ENCODE measurements at regions of chr1 and their contacts with region 1.

Region 1: GRCh38 chr1:1122078-1122811 is 6.4 kb upstream of the C1orf159 start:
- DNase-seq: peak; percentile 69 to 82 (median 82)
- ATAC-seq: peak; percentile 95
- H3K4me3 ChIP-seq: no peak overlapping the region
- H3K27ac ChIP-seq: no peak overlapping the region
- H3K4me1 ChIP-seq: peaks cover 0 to 53% of the 10 kb centered on the region in 2 experiments; a peak in 3 of 5 replicates
- H3K27me3 ChIP-seq: peaks cover 24 to 70% of the 10 kb centered on the region in 2 experiments; a peak in 4 of 5 replicates
- CTCF ChIP-seq: peak; percentile 85 to 95 (median 92)
- EP300 ChIP-seq: no peak
- POLR2A ChIP-seq: no peak
- RAD21 ChIP-seq: peak; percentile 97 to 99

Region 2: GRCh38 chr1:1206376-1207260 is 84.4 kb after region 1 on chr1 and contains the start of gene TNFRSF18:
- CTCF ChIA-PET with region 1: interaction called, 3 read pairs
- POLR2A ChIA-PET with region 1: no interaction called
- in situ Hi-C with region 1: no loop called
- intact Hi-C with region 1: loop called (anchors 5 kb)
- DNase-seq: no peak
- ATAC-seq: no peak
- H3K4me3 ChIP-seq: no peak within 1 kb of the TSS
- H3K27ac ChIP-seq: no peak within 1 kb of the TSS
- H3K4me1 ChIP-seq: peaks cover 13 to 91% of the 10 kb centered on the region in 2 experiments; a peak in 4 of 5 replicates
- H3K27me3 ChIP-seq: no peaks in the 10 kb centered on the region
- CTCF ChIP-seq: peak in 2 of 3 experiments; percentile 8 to 37; a peak in 1 of 6 replicates
- EP300 ChIP-seq: no peak
- POLR2A ChIP-seq: no peak
- RAD21 ChIP-seq: no peak
- polyA plus RNA-seq, gene TNFRSF18: not detected

Region 3: GRCh38 chr1:1231400-1232223 is 109.4 kb after region 1 on chr1 and contains the start of gene SDF4:
- CTCF ChIA-PET with region 1: no interaction called
- POLR2A ChIA-PET with region 1: interaction called, 5 read pairs
- in situ Hi-C with region 1: no loop called
- intact Hi-C with region 1: loop called (anchors 5 kb)
- DNase-seq: peak; percentile 99 to 100 (median 100)
- ATAC-seq: peak; percentile 99
- H3K4me3 ChIP-seq: peak within 1 kb of the TSS; percentile 79
- H3K27ac ChIP-seq: peak within 1 kb of the TSS; percentile 96
- H3K4me1 ChIP-seq: peaks cover 6 to 83% of the 10 kb centered on the region in 2 experiments; a peak in 4 of 5 replicates
- H3K27me3 ChIP-seq: no peaks in the 10 kb centered on the region
- CTCF ChIP-seq: no peak
- EP300 ChIP-seq: no peak
- POLR2A ChIP-seq: peak; percentile 91
- RAD21 ChIP-seq: no peak
- polyA plus RNA-seq, gene SDF4: 0.35 to 4.9 TPM

Region 4: GRCh38 chr1:1250786-1251284 is 128.6 kb after region 1 on chr1:
- CTCF ChIA-PET with region 1: interaction called, 12 read pairs
- POLR2A ChIA-PET with region 1: no interaction called
- in situ Hi-C with region 1: no loop called
- intact Hi-C with region 1: loop called (anchors 5 kb)
- DNase-seq: no peak
- ATAC-seq: peak; percentile 20
- H3K4me3 ChIP-seq: no peak overlapping the region
- H3K27ac ChIP-seq: no peak overlapping the region
- H3K4me1 ChIP-seq: peaks cover 0 to 51% of the 10 kb centered on the region in 2 experiments; a peak in 3 of 5 replicates
- H3K27me3 ChIP-seq: no peaks in the 10 kb centered on the region
- CTCF ChIP-seq: no peak
- EP300 ChIP-seq: no peak
- POLR2A ChIP-seq: no peak
- RAD21 ChIP-seq: no peak

Region 5: DNA sequence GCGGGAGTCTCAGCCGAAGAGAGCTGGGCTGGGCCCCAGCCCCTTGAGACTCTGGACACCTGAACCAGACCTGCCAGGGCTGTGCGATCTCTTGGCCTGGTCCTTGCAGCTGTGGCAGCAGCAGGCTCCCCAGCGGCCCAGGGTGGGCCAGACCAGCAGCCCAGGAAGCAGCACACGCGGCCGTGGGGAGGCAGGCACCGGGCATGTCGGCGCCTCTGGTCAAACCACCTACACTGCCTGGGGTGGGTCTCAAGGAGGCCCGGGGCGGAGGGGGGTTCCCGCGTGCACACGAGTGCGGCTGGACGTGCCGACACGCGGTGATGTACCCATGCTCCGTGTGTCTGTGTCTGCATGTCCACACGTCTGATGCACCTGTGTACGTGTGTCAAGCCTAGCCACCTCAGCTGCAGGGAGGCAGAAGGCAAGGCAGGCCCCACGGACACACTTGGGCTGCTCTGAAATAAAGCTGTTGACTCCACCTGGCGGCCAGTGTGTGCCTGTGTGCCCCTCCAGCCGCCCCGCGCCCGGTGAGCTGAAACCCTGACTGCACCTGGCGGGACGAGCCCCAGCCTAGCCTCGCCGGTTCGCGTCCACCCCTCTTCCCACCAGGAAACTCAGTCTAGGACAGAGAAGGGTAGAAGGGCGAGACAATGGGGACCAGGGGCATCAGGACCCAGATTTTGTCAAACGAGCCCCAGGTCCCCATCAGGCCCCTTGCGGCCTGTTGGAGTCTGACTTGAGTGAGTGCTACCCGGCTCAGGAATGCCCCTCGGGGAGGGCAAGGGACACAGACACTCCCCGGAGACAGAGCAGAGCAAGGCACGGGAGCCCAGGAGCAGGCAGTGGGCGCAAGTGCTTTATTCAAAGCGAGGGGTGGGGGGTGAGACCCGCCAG is 169.6 kb after region 1 on chr1:
- CTCF ChIA-PET with region 1: interaction called, 6 read pairs
- POLR2A ChIA-PET with region 1: interaction called, 3 read pairs
- in situ Hi-C with region 1: no loop called
- intact Hi-C with region 1: loop called (anchors 2 kb)
- DNase-seq: peak; percentile 62 to 89 (median 70)
- ATAC-seq: peak; percentile 81
- H3K4me3 ChIP-seq: no peak overlapping the region
- H3K27ac ChIP-seq: no peak overlapping the region
- H3K4me1 ChIP-seq: peaks cover 5 to 85% of the 10 kb centered on the region in 2 experiments; a peak in 3 of 5 replicates
- H3K27me3 ChIP-seq: peaks cover 2 to 20% of the 10 kb centered on the region in 2 experiments; a peak in 3 of 5 replicates
- CTCF ChIP-seq: peak; percentile 88 to 93 (median 88)
- EP300 ChIP-seq: no peak
- POLR2A ChIP-seq: peak; percentile 49
- RAD21 ChIP-seq: peak in 1 of 2 experiments; percentile 83; a peak in 2 of 4 replicates